ENCODE measurements at regions of chr6 and their contacts with region 1.

Region 1: DNA sequence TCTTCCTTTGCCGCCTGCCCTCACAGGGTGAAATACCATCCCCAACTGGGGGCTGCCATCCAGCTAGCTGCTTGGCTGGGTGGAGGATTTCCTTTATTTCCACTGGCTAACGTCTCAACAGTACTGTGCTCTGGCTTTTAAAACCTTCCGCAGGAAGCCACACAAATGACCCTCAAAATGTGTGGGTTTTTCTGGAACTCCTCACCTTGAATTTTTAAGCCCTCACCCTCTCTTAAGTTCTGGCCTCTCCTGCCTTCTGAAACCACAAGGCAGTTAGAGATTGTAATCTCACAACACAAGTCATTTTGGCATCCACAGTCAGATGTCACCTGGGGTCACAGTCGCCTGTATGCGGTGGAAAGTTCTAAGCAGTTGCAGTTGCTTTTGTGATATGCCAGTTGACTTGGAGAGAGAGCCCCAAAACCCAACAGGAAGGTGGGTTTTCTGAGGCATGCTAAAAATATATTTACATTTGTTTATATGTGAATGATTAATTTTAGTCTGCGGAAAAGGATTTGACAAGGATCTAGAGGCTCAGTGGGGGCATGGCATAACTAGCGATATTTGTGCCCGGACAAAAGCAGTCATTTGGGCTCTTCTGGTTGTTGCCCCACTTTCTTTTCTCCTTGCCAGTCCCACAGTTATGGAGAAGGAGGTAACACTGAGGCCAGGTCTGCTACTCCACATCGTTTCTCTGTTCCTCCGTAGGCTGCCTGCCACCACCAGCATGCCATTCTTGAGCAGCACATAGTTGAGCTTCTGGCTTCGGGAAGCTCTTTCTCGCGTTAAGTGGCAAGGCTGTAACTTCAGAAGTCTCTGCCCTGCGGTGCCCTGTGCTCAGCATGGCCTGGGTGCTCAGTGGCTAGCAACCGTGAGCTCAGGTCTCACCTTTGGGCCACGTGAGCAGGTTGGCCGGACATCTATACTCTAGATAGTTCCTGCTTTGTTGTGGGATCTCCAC is 335.3 kb downstream of the CD83 start:
- DNase-seq: peak; percentile 62
- H3K4me3 Mint-ChIP-seq: peak overlapping the region; percentile 58
- H3K27ac Mint-ChIP-seq: peak overlapping the region; percentile 91
- H3K4me1 Mint-ChIP-seq: peaks cover 88% of the 10 kb centered on the region
- H3K27me3 Mint-ChIP-seq: peaks cover 2% of the 10 kb centered on the region

Region 2: GRCh38 chr6:14117158-14118090 is 335.4 kb before region 1 on chr6 and contains the start of gene CD83:
- intact Hi-C with region 1: no loop called
- DNase-seq: peak; percentile 82
- H3K4me3 Mint-ChIP-seq: peak within 1 kb of the TSS; percentile 96
- H3K27ac Mint-ChIP-seq: peak within 1 kb of the TSS; percentile 83
- H3K4me1 Mint-ChIP-seq: peaks cover 46% of the 10 kb centered on the region
- H3K27me3 Mint-ChIP-seq: peaks cover 36% of the 10 kb centered on the region
- total RNA-seq, gene CD83: 101 and 107 TPM in 2 replicates

Region 3: DNA sequence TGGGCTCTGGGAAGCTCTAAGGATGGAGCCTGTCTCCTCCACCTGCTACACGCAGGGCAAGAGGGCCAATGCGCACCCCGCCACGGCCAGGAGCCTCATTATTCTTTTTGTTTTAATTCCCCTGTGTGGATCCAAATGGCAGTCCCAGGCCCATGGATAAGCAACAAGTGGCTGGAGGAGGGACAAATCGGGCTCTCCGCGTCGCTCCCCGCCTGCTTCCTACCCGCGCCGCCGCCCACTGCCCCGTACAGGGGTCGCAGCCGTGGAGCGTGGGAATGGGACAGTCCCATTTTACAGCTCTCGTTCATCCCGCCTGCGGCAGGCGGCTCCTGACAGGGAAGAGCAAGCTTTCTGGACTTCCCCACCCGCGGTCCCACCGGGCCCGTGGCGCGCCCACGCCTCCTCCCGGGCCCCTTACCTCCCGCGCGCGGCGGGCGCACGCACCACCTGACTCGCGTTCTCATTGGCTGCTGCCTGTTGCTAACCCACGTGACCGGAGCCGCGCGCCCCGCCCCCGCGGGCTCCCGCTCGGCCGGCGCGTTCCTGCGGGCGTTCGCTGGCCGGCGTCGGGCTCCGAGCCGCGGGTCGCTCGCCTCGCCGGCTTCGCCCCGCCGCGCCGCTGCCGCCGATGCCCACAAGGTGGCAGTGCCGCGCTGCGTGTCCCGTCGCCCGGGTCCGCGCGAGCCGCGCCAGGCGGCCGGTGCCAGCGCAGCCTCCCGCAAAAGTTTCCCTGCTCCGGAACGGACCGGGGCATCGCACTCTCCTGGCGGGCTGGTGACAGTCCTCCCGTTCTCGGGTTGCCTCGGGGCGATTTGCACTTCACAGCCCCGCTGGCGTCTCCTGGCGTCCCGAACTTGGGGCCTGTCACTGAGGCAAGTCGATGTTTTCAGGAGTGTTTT is 241.9 kb before region 1 on chr6:
- intact Hi-C with region 1: loop called (anchors 1 kb)
- DNase-seq: peak; percentile 91
- H3K4me3 Mint-ChIP-seq: peak overlapping the region; percentile 80
- H3K27ac Mint-ChIP-seq: peak overlapping the region; percentile 70
- H3K4me1 Mint-ChIP-seq: peaks cover 29% of the 10 kb centered on the region
- H3K27me3 Mint-ChIP-seq: peaks cover 6% of the 10 kb centered on the region

Region 4: DNA sequence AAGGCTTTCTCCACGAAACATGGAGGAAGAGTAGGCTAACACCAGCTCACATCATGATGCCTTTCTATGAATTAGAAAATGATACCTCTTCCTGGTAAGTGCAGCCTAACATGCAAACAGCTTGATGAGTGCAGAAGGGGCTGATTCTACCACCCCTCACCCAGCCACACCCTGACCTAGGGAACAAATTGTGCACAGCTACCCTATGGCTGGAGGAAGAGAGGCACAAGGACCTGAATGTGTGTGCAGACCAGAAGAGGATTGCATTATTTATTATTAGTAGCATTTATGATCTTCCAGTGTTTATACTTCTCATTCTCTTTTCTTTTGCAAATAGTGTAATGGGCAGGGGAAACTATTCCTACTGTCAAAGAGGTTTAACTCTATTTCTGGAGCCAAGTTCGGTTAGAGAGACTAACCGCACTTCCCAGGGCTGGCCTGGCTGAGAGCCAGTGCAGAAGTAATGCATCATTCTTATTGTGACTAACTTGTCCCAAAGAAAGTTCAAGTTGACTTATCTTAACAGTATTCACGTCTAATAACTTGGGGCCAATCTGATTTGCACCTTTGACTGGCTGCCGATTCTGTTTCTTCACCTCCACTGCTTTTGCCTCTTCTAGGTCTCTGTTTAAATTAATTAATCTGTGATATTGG is 97.8 kb before region 1 on chr6:
- intact Hi-C with region 1: no loop called
- DNase-seq: no peak
- H3K4me3 Mint-ChIP-seq: no peak overlapping the region
- H3K27ac Mint-ChIP-seq: no peak overlapping the region
- H3K4me1 Mint-ChIP-seq: peaks cover 16% of the 10 kb centered on the region
- H3K27me3 Mint-ChIP-seq: peaks cover 3% of the 10 kb centered on the region

Region 5: DNA sequence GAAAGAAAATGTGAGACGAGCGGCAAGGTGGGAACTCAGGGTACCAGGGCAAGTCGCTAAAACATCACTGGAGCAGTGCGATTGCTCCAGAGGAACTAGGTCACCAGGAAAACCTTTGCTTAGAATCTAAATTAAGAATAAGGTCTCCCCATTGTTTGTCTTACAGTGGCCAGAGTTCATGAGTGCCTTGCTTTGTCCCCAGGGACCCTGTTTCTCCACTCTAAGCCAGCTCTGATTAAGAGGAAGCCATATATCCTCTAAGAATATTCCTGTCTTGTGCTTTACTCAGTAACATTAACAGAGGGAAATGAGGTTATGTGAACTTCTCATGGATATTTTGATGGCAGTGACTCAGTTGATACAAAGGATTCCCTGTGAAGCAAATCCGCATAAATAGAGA is 29.5 kb before region 1 on chr6:
- intact Hi-C with region 1: loop called (anchors 1 kb)
- DNase-seq: no peak
- H3K4me3 Mint-ChIP-seq: no peak overlapping the region
- H3K27ac Mint-ChIP-seq: peak overlapping the region; percentile 26
- H3K4me1 Mint-ChIP-seq: peaks cover 26% of the 10 kb centered on the region
- H3K27me3 Mint-ChIP-seq: no peaks in the 10 kb centered on the region

Region 6: GRCh38 chr6:14502551-14502950 is 49.7 kb after region 1 on chr6:
- intact Hi-C with region 1: no loop called
- DNase-seq: no peak
- H3K4me3 Mint-ChIP-seq: no peak overlapping the region
- H3K27ac Mint-ChIP-seq: no peak overlapping the region
- H3K4me1 Mint-ChIP-seq: peaks cover 7% of the 10 kb centered on the region
- H3K27me3 Mint-ChIP-seq: peaks cover 2% of the 10 kb centered on the region

Region 7: GRCh38 chr6:14660806-14661579 is 208.1 kb after region 1 on chr6:
- intact Hi-C with region 1: loop called (anchors 1 kb)
- DNase-seq: peak; percentile 59
- H3K4me3 Mint-ChIP-seq: no peak overlapping the region
- H3K27ac Mint-ChIP-seq: no peak overlapping the region
- H3K4me1 Mint-ChIP-seq: peaks cover 59% of the 10 kb centered on the region
- H3K27me3 Mint-ChIP-seq: peaks cover 16% of the 10 kb centered on the region

Region 8: GRCh38 chr6:14857501-14857900 is 404.7 kb after region 1 on chr6:
- intact Hi-C with region 1: loop called (anchors 2 kb)
- DNase-seq: peak; percentile 42
- H3K4me3 Mint-ChIP-seq: peak overlapping the region; percentile 51
- H3K27ac Mint-ChIP-seq: peak overlapping the region; percentile 96
- H3K4me1 Mint-ChIP-seq: peaks cover 42% of the 10 kb centered on the region
- H3K27me3 Mint-ChIP-seq: no peaks in the 10 kb centered on the region

Region 9: GRCh38 chr6:15421947-15422733 is 969.3 kb after region 1 on chr6:
- intact Hi-C with region 1: loop called (anchors 5 kb)
- DNase-seq: peak; percentile 50
- H3K4me3 Mint-ChIP-seq: peak overlapping the region; percentile 59
- H3K27ac Mint-ChIP-seq: peak overlapping the region; percentile 83
- H3K4me1 Mint-ChIP-seq: peaks cover 80% of the 10 kb centered on the region
- H3K27me3 Mint-ChIP-seq: no peaks in the 10 kb centered on the region

Measured in activated T-helper 1 cell treated with anti-CD3 and anti-CD28 coated beads, Interleukin-12 subunit alpha, Interleukin-12 subunit beta, Interleukin-2, Interleukin-4 antibody, amounts not matched to agents 30 ng/mL and 10 ng/mL and 1 ng/mL, durations not matched to agents 14 hours and 24 hours and 36 hours (primary cell).